Caco-2 (cell line): ENCODE measurements at regions of chrX and their contacts with region 1.

Region 1: DNA sequence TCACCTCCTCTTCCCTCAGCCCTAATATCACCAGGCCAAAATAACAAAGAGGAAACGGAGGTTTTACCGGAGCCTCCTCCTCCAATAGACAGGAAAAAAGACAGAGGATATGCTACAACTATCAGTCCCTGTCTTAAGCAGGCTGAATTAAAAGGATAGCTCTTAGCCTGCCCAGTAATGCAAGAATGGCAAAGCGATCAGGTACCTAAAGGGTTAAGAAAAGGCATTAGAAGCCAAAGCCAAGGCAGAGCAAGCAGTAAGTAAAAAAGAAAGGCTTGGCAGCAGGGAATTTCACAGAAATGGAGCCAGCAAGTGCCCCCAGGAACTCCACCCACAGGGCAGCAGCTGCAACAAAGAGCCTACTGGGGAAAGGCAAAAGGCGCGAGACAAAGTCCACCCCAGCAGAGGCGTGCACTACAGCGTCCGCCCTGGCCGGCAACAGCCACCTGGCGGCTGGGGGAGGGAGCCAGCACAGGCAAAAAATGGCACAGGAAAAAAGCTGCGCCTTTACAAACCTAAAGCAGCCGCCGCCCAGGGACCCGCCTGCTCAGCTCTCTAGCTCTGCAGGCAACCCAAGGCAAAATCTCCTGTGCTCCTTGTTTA is 220.6 kb upstream of the ZC4H2 start:
- DNase-seq: peak; percentile 84 to 89
- H3K4me3 ChIP-seq: peak overlapping the region; percentile 40
- H3K4me3 Mint-ChIP-seq: peak overlapping the region; percentile 76
- H3K27ac Mint-ChIP-seq: peak overlapping the region; percentile 89
- H3K4me1 ChIP-seq: peaks cover 9% of the 10 kb centered on the region; the same call in 1 of the 2 replicates
- H3K4me1 Mint-ChIP-seq: peaks cover 9% of the 10 kb centered on the region
- H3K27me3 ChIP-seq: no peaks in the 10 kb centered on the region
- H3K27me3 Mint-ChIP-seq: no peaks in the 10 kb centered on the region
- CTCF ChIP-seq: peak; percentile 40 to 76

Region 2: GRCh38 chrX:64908121-64908520 is 288.7 kb before region 1 on chrX:
- CTCF ChIA-PET with region 1: no interaction called
- POLR2A ChIA-PET with region 1: no interaction called
- intact Hi-C with region 1: loop called (anchors 2 kb)
- DNase-seq: peak; percentile 19 to 32
- H3K4me3 ChIP-seq: no peak overlapping the region
- H3K4me3 Mint-ChIP-seq: no peak overlapping the region
- H3K27ac Mint-ChIP-seq: no peak overlapping the region
- H3K4me1 ChIP-seq: no peaks in the 10 kb centered on the region
- H3K4me1 Mint-ChIP-seq: no peaks in the 10 kb centered on the region
- H3K27me3 ChIP-seq: no peaks in the 10 kb centered on the region
- H3K27me3 Mint-ChIP-seq: no peaks in the 10 kb centered on the region
- CTCF ChIP-seq: peak in 1 of 2 experiments; percentile 40

Region 3: DNA sequence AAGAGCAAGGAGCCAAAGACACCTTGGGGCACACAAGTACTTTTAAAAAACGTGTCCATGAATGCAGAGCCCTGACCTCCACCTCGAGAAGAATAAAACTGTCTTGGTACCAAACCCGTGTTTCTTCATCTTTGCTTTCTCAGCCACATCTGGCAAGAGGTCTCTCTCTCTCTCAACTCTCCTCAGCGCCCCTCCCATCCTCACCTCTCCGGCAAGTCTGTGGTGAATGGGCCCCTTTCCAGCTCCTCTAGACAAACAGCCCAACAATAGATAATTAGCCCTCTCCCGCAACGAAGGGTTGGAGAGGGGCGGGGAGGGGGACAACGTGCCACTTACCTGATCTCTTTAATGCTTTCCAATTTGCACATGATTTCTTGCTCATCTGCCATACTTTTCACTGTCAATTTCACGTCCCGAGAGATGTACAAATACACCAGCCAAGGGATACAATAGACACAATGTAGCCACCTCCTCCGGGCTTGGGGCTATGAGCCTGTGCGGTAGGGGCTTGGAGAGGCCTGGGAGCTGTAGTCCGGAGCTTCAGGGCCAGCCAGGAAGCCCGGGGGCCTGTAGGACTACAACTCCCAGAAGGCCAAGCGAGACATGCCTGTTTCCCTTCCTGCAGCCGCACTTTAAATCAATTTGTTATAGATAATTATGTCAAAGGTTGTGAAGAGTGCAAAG is 220.7 kb before region 1 on chrX and contains the start of gene ZC4H2:
- CTCF ChIA-PET with region 1: no interaction called
- POLR2A ChIA-PET with region 1: no interaction called
- intact Hi-C with region 1: loop called (anchors 5 kb)
- DNase-seq: peak; percentile 70 to 71
- H3K4me3 ChIP-seq: peak within 1 kb of the TSS; percentile 67
- H3K4me3 Mint-ChIP-seq: peak within 1 kb of the TSS; percentile 90
- H3K27ac Mint-ChIP-seq: peak within 1 kb of the TSS; percentile 73
- H3K4me1 ChIP-seq: no peaks in the 10 kb centered on the region
- H3K4me1 Mint-ChIP-seq: peaks cover 4% of the 10 kb centered on the region
- H3K27me3 ChIP-seq: no peaks in the 10 kb centered on the region
- H3K27me3 Mint-ChIP-seq: no peaks in the 10 kb centered on the region
- CTCF ChIP-seq: no peak
- total RNA-seq, gene ZC4H2: 7.3 and 7.6 TPM in 2 replicates

Region 4: DNA sequence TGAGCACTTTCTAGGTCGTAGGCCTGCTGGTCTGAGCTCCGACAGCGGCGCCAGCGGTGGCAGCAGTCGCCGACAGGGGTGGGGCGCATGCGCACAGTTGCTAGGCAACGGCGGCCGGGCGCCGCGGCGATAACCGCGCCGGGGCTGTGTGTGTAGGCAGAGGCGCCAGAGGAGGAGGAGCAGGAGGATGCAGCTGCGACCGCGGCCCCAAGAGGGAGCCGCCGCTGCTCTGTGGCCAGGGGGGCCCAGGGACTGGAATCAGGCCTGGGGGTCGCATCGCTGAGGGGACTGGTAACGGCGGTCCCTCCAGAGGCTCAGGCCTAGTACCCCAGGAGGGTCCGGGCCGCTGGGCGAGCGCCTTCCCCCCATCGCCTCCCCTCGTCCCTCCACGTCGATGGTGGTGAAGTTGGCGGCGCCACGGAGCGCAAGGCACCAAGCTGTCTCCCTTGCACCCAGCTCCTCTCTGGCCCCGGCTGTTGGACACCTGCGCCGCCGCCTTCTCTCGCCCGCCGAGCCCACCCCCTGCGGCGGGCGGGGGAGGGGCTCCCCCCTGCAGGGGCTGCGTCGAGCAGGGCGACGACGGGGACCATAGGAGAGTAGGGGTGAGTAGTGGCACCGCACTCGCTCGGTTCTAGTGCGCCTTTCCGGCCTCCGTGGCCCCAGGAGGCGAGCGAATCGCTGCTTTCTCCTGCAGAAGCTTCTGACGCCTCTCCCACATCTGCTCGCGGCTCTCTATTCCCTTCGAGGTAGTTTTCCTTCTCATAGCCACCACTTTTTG is 162.0 kb before region 1 on chrX:
- CTCF ChIA-PET with region 1: interaction called, 14 read pairs
- POLR2A ChIA-PET with region 1: interaction called, 3 read pairs
- intact Hi-C with region 1: loop called (anchors 1 kb)
- DNase-seq: peak; percentile 84 to 86
- H3K4me3 ChIP-seq: peak within 1 kb of the TSS; percentile 75
- H3K4me3 Mint-ChIP-seq: peak within 1 kb of the TSS; percentile 77
- H3K27ac Mint-ChIP-seq: peak within 1 kb of the TSS; percentile 87
- H3K4me1 ChIP-seq: no peaks in the 10 kb centered on the region
- H3K4me1 Mint-ChIP-seq: peaks cover 8% of the 10 kb centered on the region
- H3K27me3 ChIP-seq: no peaks in the 10 kb centered on the region
- H3K27me3 Mint-ChIP-seq: no peaks in the 10 kb centered on the region
- CTCF ChIP-seq: peak; percentile 41 to 50

Region 5: DNA sequence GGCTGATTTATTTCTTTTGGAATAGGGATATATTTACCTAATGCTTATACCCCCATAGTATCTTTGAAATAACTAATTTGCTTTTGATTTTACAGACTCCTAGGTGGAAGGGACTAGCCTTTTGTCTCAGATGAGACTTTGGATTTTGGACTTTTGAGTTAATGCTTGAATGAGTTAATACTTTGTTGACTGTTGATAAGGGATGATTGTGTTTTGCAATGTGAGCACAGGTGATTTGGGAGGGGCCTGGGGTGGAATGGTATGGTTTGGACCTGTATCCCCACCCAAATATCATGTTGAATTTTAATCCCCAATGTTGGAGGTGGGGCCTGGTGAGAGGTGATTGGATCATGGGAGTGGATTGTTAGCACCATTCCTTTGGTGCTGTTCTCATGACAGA is 103.2 kb before region 1 on chrX:
- CTCF ChIA-PET with region 1: no interaction called
- POLR2A ChIA-PET with region 1: no interaction called
- intact Hi-C with region 1: loop called (anchors 1 kb)
- DNase-seq: peak; percentile 53 to 54
- H3K4me3 ChIP-seq: no peak overlapping the region
- H3K4me3 Mint-ChIP-seq: peak overlapping the region; percentile 7
- H3K27ac Mint-ChIP-seq: peak overlapping the region; percentile 43
- H3K4me1 ChIP-seq: peaks cover 30% of the 10 kb centered on the region
- H3K4me1 Mint-ChIP-seq: peaks cover 7% of the 10 kb centered on the region
- H3K27me3 ChIP-seq: no peaks in the 10 kb centered on the region
- H3K27me3 Mint-ChIP-seq: no peaks in the 10 kb centered on the region
- CTCF ChIP-seq: no peak

Region 6: GRCh38 chrX:65241059-65241721 is 44.3 kb after region 1 on chrX:
- CTCF ChIA-PET with region 1: interaction called, 3 read pairs
- POLR2A ChIA-PET with region 1: no interaction called
- intact Hi-C with region 1: loop called (anchors 2 kb)
- DNase-seq: peak; percentile 54 to 70
- H3K4me3 ChIP-seq: no peak overlapping the region
- H3K4me3 Mint-ChIP-seq: peak overlapping the region; percentile 47
- H3K27ac Mint-ChIP-seq: peak overlapping the region; percentile 83
- H3K4me1 ChIP-seq: peaks cover 6% of the 10 kb centered on the region; the same call in 1 of the 2 replicates
- H3K4me1 Mint-ChIP-seq: no peaks in the 10 kb centered on the region
- H3K27me3 ChIP-seq: no peaks in the 10 kb centered on the region
- H3K27me3 Mint-ChIP-seq: no peaks in the 10 kb centered on the region
- CTCF ChIP-seq: no peak

Region 7: DNA sequence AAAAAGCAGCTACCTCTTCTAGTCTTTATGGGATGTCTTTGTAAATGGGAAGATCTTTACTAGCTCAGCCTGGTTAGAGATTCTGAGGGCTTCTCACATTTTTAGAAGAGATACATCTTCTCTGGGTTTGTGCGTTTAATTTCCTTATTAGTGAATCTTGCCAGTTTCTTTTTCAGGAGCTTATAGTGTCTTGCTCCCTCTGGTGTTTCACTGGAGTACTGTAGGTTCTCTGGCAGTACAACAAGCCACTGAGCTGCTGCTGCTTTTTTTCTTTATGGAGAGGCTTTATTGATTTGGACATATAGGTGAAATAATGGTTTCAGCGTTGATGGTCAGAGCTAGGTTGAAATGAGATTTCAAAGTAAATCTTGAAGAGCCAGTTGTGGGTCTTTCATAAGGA is 254.8 kb after region 1 on chrX:
- CTCF ChIA-PET with region 1: no interaction called
- POLR2A ChIA-PET with region 1: no interaction called
- intact Hi-C with region 1: loop called (anchors 5 kb)
- DNase-seq: peak in 1 of 2 experiments; percentile 24
- H3K4me3 ChIP-seq: no peak overlapping the region
- H3K4me3 Mint-ChIP-seq: no peak overlapping the region
- H3K27ac Mint-ChIP-seq: no peak overlapping the region
- H3K4me1 ChIP-seq: no peaks in the 10 kb centered on the region
- H3K4me1 Mint-ChIP-seq: no peaks in the 10 kb centered on the region
- H3K27me3 ChIP-seq: no peaks in the 10 kb centered on the region
- H3K27me3 Mint-ChIP-seq: no peaks in the 10 kb centered on the region
- CTCF ChIP-seq: peak; percentile 37 to 48